ENCODE measurements at regions of chr1 and their contacts with region 1.

Region 1: GRCh38 chr1:116504308-116505156 is 66.3 kb downstream of the CD58 start:
- DNase-seq: peak; percentile 81 to 95
- ATAC-seq: peak; percentile 82 to 97 (median 93)
- H3K4me3 ChIP-seq: no peak overlapping the region
- H3K4me3 Mint-ChIP-seq: peak overlapping the region; percentile 75
- H3K27ac ChIP-seq: peak overlapping the region; percentile 84
- H3K27ac Mint-ChIP-seq: peak overlapping the region; percentile 98 to 99
- H3K4me1 ChIP-seq: peaks cover 61% of the 10 kb centered on the region
- H3K4me1 Mint-ChIP-seq: peaks cover 78 to 80% of the 10 kb centered on the region in 2 donors
- H3K27me3 ChIP-seq: no peaks in the 10 kb centered on the region
- H3K27me3 Mint-ChIP-seq: no peaks in the 10 kb centered on the region
- CTCF ChIP-seq: no peak

Region 2: DNA sequence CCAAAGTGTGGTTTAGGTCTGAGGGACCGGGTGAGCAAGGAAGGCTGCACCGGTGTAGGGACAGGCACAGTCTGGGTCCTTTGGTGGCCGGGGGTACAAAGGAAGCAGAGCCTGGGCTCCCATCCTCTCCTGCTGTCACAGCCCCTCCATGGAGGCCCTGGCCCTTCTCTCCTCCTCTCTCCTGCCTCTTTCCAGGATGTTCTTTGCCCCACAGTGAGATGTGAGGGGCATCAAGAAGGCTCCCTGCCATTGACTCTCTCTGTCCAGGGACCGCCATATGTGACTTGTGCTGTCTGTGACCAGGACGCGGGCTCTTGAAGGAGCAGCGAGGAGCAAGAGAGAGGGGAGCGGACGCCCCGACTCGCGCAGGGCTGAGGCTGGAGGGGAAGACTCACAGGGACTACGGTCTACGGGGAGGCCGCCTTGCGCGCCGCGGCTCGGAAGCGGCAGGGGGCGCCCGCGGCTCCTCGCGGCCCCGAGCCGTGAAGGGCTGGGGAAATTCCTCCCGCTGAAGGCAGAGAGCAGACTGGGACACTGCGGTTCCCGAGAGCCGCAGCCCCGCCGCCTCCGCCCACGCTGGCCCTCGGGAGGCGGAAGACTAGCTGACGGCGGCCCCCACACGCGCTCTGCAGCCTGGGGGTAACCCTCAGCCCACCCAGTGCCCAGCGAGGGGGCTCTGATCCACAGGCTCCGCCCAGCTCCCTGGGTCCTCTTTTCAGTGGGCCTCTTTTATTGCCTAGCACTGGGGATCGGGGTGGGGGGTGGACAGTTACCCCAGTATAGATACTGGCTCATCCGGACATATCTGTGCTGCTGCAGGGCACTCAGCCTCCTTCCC is 352.6 kb before region 1 on chr1:
- intact Hi-C with region 1: loop called (anchors 1 kb)
- DNase-seq: peak; percentile 79 to 92
- ATAC-seq: peak; percentile 96 to 97 (median 96)
- H3K4me3 ChIP-seq: peak overlapping the region; percentile 18
- H3K4me3 Mint-ChIP-seq: peak overlapping the region; percentile 64
- H3K27ac ChIP-seq: no peak overlapping the region
- H3K27ac Mint-ChIP-seq: peak overlapping the region in 1 of 2 donors; percentile 87
- H3K4me1 ChIP-seq: peaks cover 10% of the 10 kb centered on the region
- H3K4me1 Mint-ChIP-seq: peaks cover 6 to 10% of the 10 kb centered on the region in 2 donors
- H3K27me3 ChIP-seq: no peaks in the 10 kb centered on the region
- H3K27me3 Mint-ChIP-seq: peaks cover 5 to 10% of the 10 kb centered on the region in 2 donors
- CTCF ChIP-seq: peak; percentile 85

Region 3: GRCh38 chr1:116435806-116436610 is 68.5 kb before region 1 on chr1:
- intact Hi-C with region 1: loop called (anchors 5 kb)
- DNase-seq: no peak
- ATAC-seq: peak; percentile 15 to 37 (median 24)
- H3K4me3 ChIP-seq: no peak overlapping the region
- H3K4me3 Mint-ChIP-seq: no peak overlapping the region
- H3K27ac ChIP-seq: no peak overlapping the region
- H3K27ac Mint-ChIP-seq: peak overlapping the region in 1 of 2 donors; percentile 21
- H3K4me1 ChIP-seq: no peaks in the 10 kb centered on the region
- H3K4me1 Mint-ChIP-seq: no peaks in the 10 kb centered on the region
- H3K27me3 ChIP-seq: no peaks in the 10 kb centered on the region
- H3K27me3 Mint-ChIP-seq: peaks cover 10 to 24% of the 10 kb centered on the region in 2 donors
- CTCF ChIP-seq: no peak

Region 4: GRCh38 chr1:116472431-116472961 is 32.0 kb before region 1 on chr1:
- intact Hi-C with region 1: no loop called
- DNase-seq: no peak
- ATAC-seq: no peak
- H3K4me3 ChIP-seq: no peak overlapping the region
- H3K4me3 Mint-ChIP-seq: no peak overlapping the region
- H3K27ac ChIP-seq: no peak overlapping the region
- H3K27ac Mint-ChIP-seq: no peak overlapping the region
- H3K4me1 ChIP-seq: no peaks in the 10 kb centered on the region
- H3K4me1 Mint-ChIP-seq: no peaks in the 10 kb centered on the region
- H3K27me3 ChIP-seq: no peaks in the 10 kb centered on the region
- H3K27me3 Mint-ChIP-seq: no peaks in the 10 kb centered on the region
- CTCF ChIP-seq: no peak

Region 5: DNA sequence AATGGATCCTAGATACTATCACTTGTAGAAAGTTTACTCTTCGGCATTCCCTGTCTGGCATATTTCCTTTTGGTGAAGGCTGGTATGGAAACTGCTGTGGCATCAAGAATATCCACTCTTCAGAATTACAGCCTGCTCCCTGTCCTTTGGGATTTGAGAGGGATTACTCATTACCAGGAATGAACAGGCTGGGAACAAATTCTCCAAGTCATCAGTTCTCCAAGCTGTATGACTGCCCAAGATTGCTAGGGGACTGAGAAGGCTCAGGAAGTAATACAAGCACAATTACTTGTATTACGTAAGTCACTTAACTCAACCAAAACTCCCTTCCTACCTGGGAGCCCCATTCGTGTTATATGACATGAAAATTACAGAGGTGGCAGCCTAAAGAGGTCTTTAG is 16.7 kb after region 1 on chr1:
- intact Hi-C with region 1: no loop called
- DNase-seq: no peak
- ATAC-seq: no peak
- H3K4me3 ChIP-seq: no peak overlapping the region
- H3K4me3 Mint-ChIP-seq: no peak overlapping the region
- H3K27ac ChIP-seq: no peak overlapping the region
- H3K27ac Mint-ChIP-seq: no peak overlapping the region
- H3K4me1 ChIP-seq: peaks cover 8% of the 10 kb centered on the region
- H3K4me1 Mint-ChIP-seq: peaks cover 25 to 28% of the 10 kb centered on the region in 2 donors
- H3K27me3 ChIP-seq: no peaks in the 10 kb centered on the region
- H3K27me3 Mint-ChIP-seq: no peaks in the 10 kb centered on the region
- CTCF ChIP-seq: no peak

Region 6: DNA sequence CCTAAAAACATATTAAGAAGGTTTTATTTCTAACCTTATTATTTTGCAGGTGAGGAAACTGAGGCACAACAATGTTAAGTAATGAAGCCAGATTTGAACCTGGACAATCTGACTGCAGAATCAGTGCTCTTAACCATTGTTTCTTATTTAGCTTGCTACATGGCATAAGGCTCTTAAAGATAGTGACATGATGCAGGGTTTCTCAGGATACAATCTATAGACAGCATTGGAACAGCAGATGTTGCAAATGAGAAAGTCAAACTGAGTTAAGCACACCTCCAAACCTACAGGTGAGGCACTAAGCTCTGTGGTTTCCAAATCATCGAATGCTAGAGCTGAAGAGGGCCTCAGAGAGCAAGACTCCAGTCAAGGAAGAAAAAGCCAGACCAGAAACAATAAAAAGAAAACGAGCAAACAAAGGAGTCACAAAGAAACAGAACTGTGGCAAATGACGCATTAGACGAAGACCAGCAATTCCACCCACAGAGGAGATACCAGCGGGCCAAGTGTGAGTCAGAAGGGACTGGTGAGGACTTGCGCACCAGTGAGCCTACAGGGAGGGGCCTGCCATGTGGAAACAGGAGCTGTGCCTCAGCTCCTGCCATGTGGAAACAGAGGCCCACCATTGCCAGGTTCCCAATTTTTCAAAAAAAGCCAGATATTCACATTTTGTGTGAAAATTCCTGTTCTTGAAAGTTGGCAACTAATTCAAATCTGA is 51.9 kb after region 1 on chr1:
- intact Hi-C with region 1: loop called (anchors 1 kb)
- DNase-seq: peak; percentile 57 to 84
- ATAC-seq: peak; percentile 93 to 94 (median 94)
- H3K4me3 ChIP-seq: no peak overlapping the region
- H3K4me3 Mint-ChIP-seq: peak overlapping the region; percentile 42
- H3K27ac ChIP-seq: peak overlapping the region; percentile 82
- H3K27ac Mint-ChIP-seq: peak overlapping the region; percentile 59 to 85
- H3K4me1 ChIP-seq: peaks cover 34% of the 10 kb centered on the region
- H3K4me1 Mint-ChIP-seq: peaks cover 82 to 83% of the 10 kb centered on the region in 2 donors
- H3K27me3 ChIP-seq: no peaks in the 10 kb centered on the region
- H3K27me3 Mint-ChIP-seq: no peaks in the 10 kb centered on the region
- CTCF ChIP-seq: no peak

Region 7: DNA sequence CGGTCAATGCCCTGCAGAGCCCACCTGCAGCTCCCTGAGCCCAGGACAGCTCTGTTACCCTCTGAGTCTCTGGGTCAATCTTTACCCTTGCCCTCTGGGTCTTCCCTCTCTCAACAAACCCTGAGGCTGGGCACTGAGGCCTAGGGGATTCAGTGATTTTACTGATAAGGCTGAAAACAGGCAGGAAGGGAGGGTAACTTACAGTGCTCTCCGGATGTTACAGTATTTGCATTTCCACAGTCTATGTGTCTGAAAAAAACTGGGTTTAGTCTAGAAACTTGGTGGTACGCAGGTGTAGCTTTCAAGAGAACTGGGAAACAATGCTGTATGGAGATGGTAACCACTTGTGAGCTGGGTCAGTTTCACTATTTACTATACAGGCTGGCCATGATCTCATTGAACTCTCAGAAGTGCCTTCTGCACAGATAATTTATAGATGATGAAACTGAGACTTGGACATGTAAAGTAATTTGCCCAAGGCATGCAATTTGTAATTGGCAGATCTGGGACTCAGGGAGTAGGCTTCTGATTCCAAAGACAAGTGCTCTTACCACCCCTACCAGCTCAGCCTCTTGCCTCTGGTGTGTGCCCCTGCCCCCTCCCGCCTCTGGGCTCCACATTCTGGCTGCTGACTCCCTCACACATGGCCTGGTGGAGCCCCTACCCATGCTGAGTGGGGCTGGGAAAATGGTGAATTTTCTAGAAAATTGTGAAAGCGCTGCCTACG is 1150.1 kb after region 1 on chr1:
- intact Hi-C with region 1: loop called (anchors 10 kb)
- DNase-seq: peak in 1 of 2 donors; percentile 56
- ATAC-seq: peak in 1 of 3 donors; percentile 19
- H3K4me3 ChIP-seq: no peak overlapping the region
- H3K4me3 Mint-ChIP-seq: peak overlapping the region; percentile 80
- H3K27ac ChIP-seq: peak overlapping the region; percentile 80
- H3K27ac Mint-ChIP-seq: peak overlapping the region; percentile 90 to 91
- H3K4me1 ChIP-seq: peaks cover 84% of the 10 kb centered on the region
- H3K4me1 Mint-ChIP-seq: peaks cover 84 to 85% of the 10 kb centered on the region in 2 donors
- H3K27me3 ChIP-seq: no peaks in the 10 kb centered on the region
- H3K27me3 Mint-ChIP-seq: peaks cover 12 to 19% of the 10 kb centered on the region in 2 donors
- CTCF ChIP-seq: no peak